ENCODE measurements at regions of chr19 and their contacts with region 1.

Region 1: GRCh38 chr19:51986309-51987291 is at the start of gene ZNF350:
- DNase-seq: peak; percentile 96 to 97
- H3K4me3 ChIP-seq: peak within 1 kb of the TSS; percentile 81
- CTCF ChIP-seq: no peak
- POLR2A ChIP-seq: no peak
- total RNA-seq, gene ZNF350: 7.3 to 21.9 (median 12.1) TPM

Region 2: DNA sequence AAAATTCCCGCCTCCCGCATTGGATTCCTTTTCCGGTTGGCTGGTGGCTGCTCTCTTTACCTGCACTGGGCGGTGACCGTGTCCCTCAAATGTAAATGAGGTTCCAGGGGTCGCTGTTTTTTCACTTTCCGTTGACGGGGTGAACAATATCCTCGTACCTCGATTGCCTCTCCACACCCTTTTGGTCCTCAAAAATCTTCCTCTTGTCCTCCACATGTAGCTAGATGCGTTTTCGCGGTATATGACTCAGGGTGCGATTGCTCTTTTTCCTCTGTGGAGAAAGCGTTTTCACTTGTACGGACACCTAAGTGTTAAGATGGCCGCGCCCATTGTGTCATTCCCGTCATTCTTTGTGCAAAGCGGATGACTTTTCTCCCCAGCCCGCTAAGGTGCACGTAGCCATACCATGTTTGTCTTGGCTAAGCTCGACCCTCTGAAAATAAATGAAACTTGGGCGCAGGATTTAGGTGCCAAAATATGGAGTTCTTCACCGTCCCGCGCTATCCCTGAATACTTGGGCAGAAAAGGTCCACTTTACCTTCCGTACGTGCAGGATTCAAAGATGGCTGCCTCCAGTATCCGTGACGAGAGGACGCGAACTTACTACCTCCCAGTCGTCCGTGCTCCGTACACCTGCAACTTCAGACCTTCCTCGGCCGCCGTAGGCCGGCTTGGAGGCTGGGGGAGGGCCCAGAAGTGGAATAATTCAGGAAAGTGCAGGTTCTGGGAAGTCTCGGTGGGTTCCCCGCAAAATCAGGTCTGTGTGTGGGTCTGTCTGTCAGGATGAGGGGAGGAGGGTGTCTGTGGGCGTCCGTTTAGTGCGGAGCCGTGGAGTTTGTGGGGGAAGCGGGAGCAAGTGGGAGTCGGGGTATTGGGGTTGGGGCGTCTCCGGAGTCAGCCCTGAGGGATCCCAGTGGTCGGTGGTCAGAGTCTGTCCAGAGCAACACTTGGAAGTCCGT is 59.5 kb before region 1 on chr19 and contains the start of gene ZNF613:
- intact Hi-C with region 1: loop called (anchors 10 kb)
- DNase-seq: peak; percentile 86 to 96
- H3K4me3 ChIP-seq: peak within 1 kb of the TSS; percentile 58
- CTCF ChIP-seq: no peak
- POLR2A ChIP-seq: no peak
- total RNA-seq, gene ZNF613: 3.6 to 17.2 (median 7.0) TPM